ENCODE measurements at regions of chrX and their contacts with region 1.

Region 1: DNA sequence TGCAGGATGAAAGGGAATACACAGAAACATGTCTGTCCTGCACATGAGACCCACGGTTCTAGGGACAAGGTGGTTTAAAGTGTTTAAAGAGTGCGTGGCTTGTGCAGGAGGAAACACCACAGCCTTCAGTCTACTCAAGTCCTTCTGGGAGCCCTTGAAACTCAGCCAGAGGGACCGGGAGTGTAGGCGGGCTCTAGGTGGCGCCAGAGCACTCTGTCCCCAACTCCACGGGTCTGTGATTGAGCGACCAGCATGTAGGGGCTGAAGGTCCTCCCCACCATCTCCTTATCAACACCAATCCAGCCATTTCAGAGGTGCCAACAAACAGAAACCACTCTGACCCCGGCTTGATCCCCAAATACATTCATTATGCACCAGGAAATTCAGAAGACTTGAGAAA is 82.0 kb upstream of the CLDN34 start:
- DNase-seq: peak; percentile 48 to 56
- H3K4me3 ChIP-seq: no peak overlapping the region
- H3K4me3 Mint-ChIP-seq: no peak overlapping the region
- H3K27ac Mint-ChIP-seq: no peak overlapping the region
- H3K4me1 ChIP-seq: peaks cover 4% of the 10 kb centered on the region
- H3K4me1 Mint-ChIP-seq: peaks cover 6% of the 10 kb centered on the region
- H3K27me3 ChIP-seq: no peaks in the 10 kb centered on the region
- H3K27me3 Mint-ChIP-seq: no peaks in the 10 kb centered on the region
- CTCF ChIP-seq: peak; percentile 38 to 68

Region 2: DNA sequence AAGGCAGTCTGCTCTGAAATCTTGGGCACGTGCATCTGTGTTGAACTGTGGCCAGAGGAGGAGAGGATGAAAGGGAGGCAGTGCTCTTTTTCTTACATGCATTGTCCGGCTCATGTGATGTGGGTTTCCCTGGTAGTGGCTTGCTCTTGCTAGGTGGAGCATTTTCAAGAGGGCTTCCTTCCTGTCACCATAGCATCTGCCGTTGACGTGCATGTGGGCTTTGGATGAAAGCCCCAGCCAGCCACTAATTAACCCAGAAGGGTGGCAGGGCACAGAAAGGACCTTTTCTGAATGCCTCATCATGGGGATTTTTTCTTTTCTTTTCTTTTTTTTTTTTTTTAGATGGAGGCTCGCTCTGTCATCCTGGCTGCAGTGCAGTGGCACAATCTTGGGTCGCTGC is 240.8 kb before region 1 on chrX:
- CTCF ChIA-PET with region 1: no interaction called
- POLR2A ChIA-PET with region 1: no interaction called
- intact Hi-C with region 1: no loop called
- DNase-seq: no peak
- H3K4me3 ChIP-seq: no peak overlapping the region
- H3K4me3 Mint-ChIP-seq: no peak overlapping the region
- H3K27ac Mint-ChIP-seq: no peak overlapping the region
- H3K4me1 ChIP-seq: no peaks in the 10 kb centered on the region
- H3K4me1 Mint-ChIP-seq: no peaks in the 10 kb centered on the region
- H3K27me3 ChIP-seq: no peaks in the 10 kb centered on the region
- H3K27me3 Mint-ChIP-seq: no peaks in the 10 kb centered on the region
- CTCF ChIP-seq: no peak

Region 3: DNA sequence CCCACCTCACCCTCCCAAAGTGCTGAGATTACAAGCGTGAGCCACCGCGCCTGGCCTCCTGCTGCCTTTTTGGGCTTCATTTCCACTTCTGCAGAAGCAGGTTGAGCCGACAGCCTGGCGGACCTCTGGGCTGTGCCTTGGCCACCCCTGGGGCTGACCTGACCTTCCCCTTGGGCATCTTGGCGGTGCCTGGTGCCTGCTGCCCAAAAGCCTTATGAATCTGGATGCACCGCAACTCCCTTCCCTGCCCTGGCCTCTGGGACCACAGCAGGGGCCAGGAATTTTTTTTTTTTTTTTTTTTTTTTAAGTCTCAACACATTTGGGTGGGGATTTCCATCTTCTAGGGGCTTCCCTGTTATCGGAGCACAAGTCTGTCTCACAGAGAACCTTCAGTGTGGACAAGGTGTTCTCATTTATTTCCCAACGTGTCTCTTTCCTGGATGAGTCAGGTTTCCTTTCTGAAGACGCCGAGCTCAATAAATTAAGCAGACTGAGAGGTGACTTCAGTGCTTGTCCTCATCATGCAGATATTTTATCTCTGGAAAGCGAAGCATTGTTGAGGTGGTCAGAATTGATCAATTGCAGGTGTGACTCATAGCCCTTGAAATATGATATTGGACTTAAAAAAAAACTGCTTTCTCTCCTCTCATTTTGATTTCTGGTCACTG is 19.2 kb before region 1 on chrX:
- CTCF ChIA-PET with region 1: no interaction called
- POLR2A ChIA-PET with region 1: no interaction called
- intact Hi-C with region 1: no loop called
- DNase-seq: no peak
- H3K4me3 ChIP-seq: no peak overlapping the region
- H3K4me3 Mint-ChIP-seq: no peak overlapping the region
- H3K27ac Mint-ChIP-seq: peak overlapping the region; percentile 91
- H3K4me1 ChIP-seq: peaks cover 37% of the 10 kb centered on the region
- H3K4me1 Mint-ChIP-seq: peaks cover 24% of the 10 kb centered on the region
- H3K27me3 ChIP-seq: no peaks in the 10 kb centered on the region
- H3K27me3 Mint-ChIP-seq: no peaks in the 10 kb centered on the region
- CTCF ChIP-seq: no peak

Region 4: DNA sequence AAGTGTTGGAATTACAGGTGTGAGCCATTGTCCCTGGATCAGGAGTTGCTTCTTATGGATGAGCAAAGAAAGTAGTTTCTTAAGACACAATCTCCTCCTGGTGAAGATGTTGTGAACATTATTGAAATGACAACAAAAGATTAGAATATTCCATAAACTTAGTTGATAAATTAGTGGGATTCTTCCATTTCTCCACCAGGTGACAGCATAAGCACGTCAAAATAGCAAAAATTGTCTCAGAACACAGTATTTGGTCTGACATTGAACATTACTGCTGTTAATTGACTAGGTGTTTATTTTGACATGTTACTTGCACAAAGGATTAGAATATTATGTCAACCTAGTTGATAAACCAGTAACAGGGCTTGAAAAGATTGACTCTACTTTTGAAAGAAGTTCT is 103.6 kb after region 1 on chrX:
- CTCF ChIA-PET with region 1: no interaction called
- POLR2A ChIA-PET with region 1: no interaction called
- intact Hi-C with region 1: loop called (anchors 5 kb)
- DNase-seq: peak in 1 of 2 experiments; percentile 22
- H3K4me3 ChIP-seq: no peak overlapping the region
- H3K4me3 Mint-ChIP-seq: no peak overlapping the region
- H3K27ac Mint-ChIP-seq: no peak overlapping the region
- H3K4me1 ChIP-seq: no peaks in the 10 kb centered on the region
- H3K4me1 Mint-ChIP-seq: no peaks in the 10 kb centered on the region
- H3K27me3 ChIP-seq: no peaks in the 10 kb centered on the region
- H3K27me3 Mint-ChIP-seq: no peaks in the 10 kb centered on the region
- CTCF ChIP-seq: peak; percentile 23 to 55

Measured in Caco-2 (cell line).